ENCODE measurements at regions of chr12 and their contacts with region 1.

Region 1: GRCh38 chr12:76031537-76032073 is at the start of gene PHLDA1:
- DNase-seq: peak; percentile 88 to 98
- H3K4me3 ChIP-seq: peak within 1 kb of the TSS; percentile 94
- H3K27ac ChIP-seq: peak within 1 kb of the TSS; percentile 95
- H3K4me1 ChIP-seq: peaks cover 37% of the 10 kb centered on the region
- H3K27me3 ChIP-seq: no peaks in the 10 kb centered on the region
- CTCF ChIP-seq: peak; percentile 44; the same call in 1 of the 2 replicates
- total RNA-seq, gene PHLDA1: 29.1 and 38.3 TPM in 2 replicates

Region 2: DNA sequence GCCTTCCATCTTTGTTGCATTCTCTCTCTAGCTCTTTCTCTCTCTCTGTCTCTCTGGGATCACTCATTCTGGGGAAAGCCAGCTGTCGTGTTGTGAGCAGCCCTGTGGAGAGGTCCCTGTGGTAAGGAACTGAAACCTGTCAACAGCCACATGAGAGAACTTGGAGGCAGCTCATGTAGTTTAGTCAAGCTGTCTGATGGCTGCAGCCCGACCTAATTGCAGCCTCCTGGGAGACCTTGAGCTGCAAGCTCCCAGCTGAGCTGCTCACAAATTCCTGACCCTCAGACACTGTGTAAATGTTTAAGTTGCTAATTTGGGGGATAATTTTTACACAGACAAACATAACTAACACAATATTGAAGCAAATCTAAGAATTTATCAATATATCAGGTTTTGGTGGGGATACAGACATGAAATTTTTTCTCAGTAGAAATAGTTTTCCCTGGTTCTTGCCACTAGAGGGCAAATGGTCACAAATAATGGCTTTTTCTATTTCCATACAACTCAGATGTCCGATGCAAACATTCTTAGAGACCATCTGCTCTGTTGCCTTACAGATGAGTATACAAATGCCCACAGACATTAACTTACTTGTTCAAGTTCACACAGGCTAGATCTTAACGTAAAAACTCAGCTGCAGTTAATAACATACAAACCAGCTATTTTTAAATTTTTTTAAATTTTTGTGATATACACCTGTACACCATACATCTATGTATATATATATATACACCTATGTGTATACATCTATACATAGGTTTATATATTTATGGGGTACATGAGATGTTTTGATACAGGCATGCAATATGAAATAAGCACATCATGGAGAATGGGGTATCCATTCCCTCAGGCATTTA is 504.7 kb before region 1 on chr12:
- CTCF ChIA-PET with region 1: no interaction called
- POLR2A ChIA-PET with region 1: interaction called, 6 read pairs
- intact Hi-C with region 1: loop called (anchors 2 kb)
- DNase-seq: peak; percentile 3 to 40
- H3K4me3 ChIP-seq: no peak overlapping the region
- H3K27ac ChIP-seq: no peak overlapping the region
- H3K4me1 ChIP-seq: no peaks in the 10 kb centered on the region; the same call in 1 of the 2 replicates
- H3K27me3 ChIP-seq: no peaks in the 10 kb centered on the region
- CTCF ChIP-seq: peak; percentile 82

Region 3: GRCh38 chr12:75722714-75723200 is 308.8 kb before region 1 on chr12:
- CTCF ChIA-PET with region 1: no interaction called
- POLR2A ChIA-PET with region 1: interaction called, 11 read pairs
- intact Hi-C with region 1: loop called (anchors 2 kb)
- DNase-seq: peak in 1 of 2 experiments; percentile 24
- H3K4me3 ChIP-seq: no peak overlapping the region
- H3K27ac ChIP-seq: no peak overlapping the region
- H3K4me1 ChIP-seq: peaks cover 13% of the 10 kb centered on the region
- H3K27me3 ChIP-seq: no peaks in the 10 kb centered on the region
- CTCF ChIP-seq: no peak

Region 4: DNA sequence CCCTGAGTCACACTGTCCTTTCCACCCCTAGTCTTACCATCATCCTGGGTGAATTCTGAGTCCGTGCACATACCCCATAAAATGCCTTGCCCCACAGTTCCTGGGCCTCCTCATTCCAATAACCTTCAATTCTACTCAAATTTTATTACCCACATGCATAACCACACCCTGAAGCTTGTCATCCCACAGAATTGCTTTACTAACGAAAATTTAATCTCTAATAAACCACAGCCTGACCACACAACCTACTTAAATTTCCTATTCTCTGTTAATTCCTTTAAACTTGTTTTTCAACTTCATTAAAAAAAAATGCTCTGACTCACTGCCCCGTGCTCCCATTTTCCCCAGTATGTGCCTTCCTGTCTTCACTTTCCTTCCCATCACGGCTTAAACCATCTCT is 205.9 kb before region 1 on chr12:
- CTCF ChIA-PET with region 1: no interaction called
- POLR2A ChIA-PET with region 1: no interaction called
- intact Hi-C with region 1: loop called (anchors 2 kb)
- DNase-seq: peak; percentile 40 to 94
- H3K4me3 ChIP-seq: peak overlapping the region; percentile 21; the same call in 1 of the 2 replicates
- H3K27ac ChIP-seq: peak overlapping the region; percentile 87
- H3K4me1 ChIP-seq: peaks cover 41% of the 10 kb centered on the region
- H3K27me3 ChIP-seq: no peaks in the 10 kb centered on the region
- CTCF ChIP-seq: no peak

Region 5: GRCh38 chr12:75977952-75978671 is 53.5 kb before region 1 on chr12:
- CTCF ChIA-PET with region 1: interaction called, 4 read pairs
- POLR2A ChIA-PET with region 1: interaction called, 7 read pairs
- intact Hi-C with region 1: loop called (anchors 1 kb)
- DNase-seq: peak; percentile 86 to 100
- H3K4me3 ChIP-seq: peak overlapping the region; percentile 28; the same call in 1 of the 2 replicates
- H3K27ac ChIP-seq: peak overlapping the region; percentile 99
- H3K4me1 ChIP-seq: peaks cover 64% of the 10 kb centered on the region
- H3K27me3 ChIP-seq: no peaks in the 10 kb centered on the region
- CTCF ChIP-seq: no peak

Region 6: GRCh38 chr12:76348079-76348901 is 316.7 kb after region 1 on chr12 and contains the start of gene BBS10:
- CTCF ChIA-PET with region 1: interaction called, 3 read pairs
- POLR2A ChIA-PET with region 1: no interaction called
- intact Hi-C with region 1: loop called (anchors 10 kb)
- DNase-seq: peak; percentile 79 to 84
- H3K4me3 ChIP-seq: peak within 1 kb of the TSS; percentile 88
- H3K27ac ChIP-seq: peak within 1 kb of the TSS; percentile 60
- H3K4me1 ChIP-seq: peaks cover 14% of the 10 kb centered on the region
- H3K27me3 ChIP-seq: no peaks in the 10 kb centered on the region
- CTCF ChIP-seq: peak; percentile 47
- total RNA-seq, gene BBS10: 5.5 and 8.4 TPM in 2 replicates

Measured in PC-9 (cell line).